ENCODE measurements at regions of chr12 and their contacts with region 1.

Region 1: GRCh38 chr12:10001171-10001776 is 2.4 kb upstream of the CLEC1B start:
- DNase-seq: no peak
- ATAC-seq: no peak
- H3K4me3 ChIP-seq: no peak overlapping the region
- H3K4me3 Mint-ChIP-seq: no peak overlapping the region
- H3K27ac ChIP-seq: no peak overlapping the region
- H3K27ac Mint-ChIP-seq: no peak overlapping the region
- H3K4me1 ChIP-seq: no peaks in the 10 kb centered on the region
- H3K4me1 Mint-ChIP-seq: peaks cover 7% of the 10 kb centered on the region in 2 donors
- H3K27me3 ChIP-seq: no peaks in the 10 kb centered on the region
- H3K27me3 Mint-ChIP-seq: peaks cover 6 to 7% of the 10 kb centered on the region in 2 donors
- CTCF ChIP-seq: no peak

Region 2: GRCh38 chr12:9741726-9742125 is 259.5 kb before region 1 on chr12:
- intact Hi-C with region 1: loop called (anchors 5 kb)
- DNase-seq: peak; percentile 60 to 93
- ATAC-seq: peak; percentile 71 to 88 (median 82)
- H3K4me3 ChIP-seq: peak overlapping the region; percentile 21
- H3K4me3 Mint-ChIP-seq: peak overlapping the region; percentile 86
- H3K27ac ChIP-seq: peak overlapping the region; percentile 82
- H3K27ac Mint-ChIP-seq: peak overlapping the region; percentile 84 to 85
- H3K4me1 ChIP-seq: peaks cover 32% of the 10 kb centered on the region
- H3K4me1 Mint-ChIP-seq: peaks cover 52 to 53% of the 10 kb centered on the region in 2 donors
- H3K27me3 ChIP-seq: no peaks in the 10 kb centered on the region
- H3K27me3 Mint-ChIP-seq: no peaks in the 10 kb centered on the region
- CTCF ChIP-seq: no peak

Region 3: GRCh38 chr12:10016881-10017280 is 15.6 kb after region 1 on chr12:
- intact Hi-C with region 1: no loop called
- DNase-seq: no peak
- ATAC-seq: no peak
- H3K4me3 ChIP-seq: no peak overlapping the region
- H3K4me3 Mint-ChIP-seq: no peak overlapping the region
- H3K27ac ChIP-seq: no peak overlapping the region
- H3K27ac Mint-ChIP-seq: no peak overlapping the region
- H3K4me1 ChIP-seq: no peaks in the 10 kb centered on the region
- H3K4me1 Mint-ChIP-seq: no peaks in the 10 kb centered on the region
- H3K27me3 ChIP-seq: no peaks in the 10 kb centered on the region
- H3K27me3 Mint-ChIP-seq: no peaks in the 10 kb centered on the region
- CTCF ChIP-seq: no peak

Region 4: DNA sequence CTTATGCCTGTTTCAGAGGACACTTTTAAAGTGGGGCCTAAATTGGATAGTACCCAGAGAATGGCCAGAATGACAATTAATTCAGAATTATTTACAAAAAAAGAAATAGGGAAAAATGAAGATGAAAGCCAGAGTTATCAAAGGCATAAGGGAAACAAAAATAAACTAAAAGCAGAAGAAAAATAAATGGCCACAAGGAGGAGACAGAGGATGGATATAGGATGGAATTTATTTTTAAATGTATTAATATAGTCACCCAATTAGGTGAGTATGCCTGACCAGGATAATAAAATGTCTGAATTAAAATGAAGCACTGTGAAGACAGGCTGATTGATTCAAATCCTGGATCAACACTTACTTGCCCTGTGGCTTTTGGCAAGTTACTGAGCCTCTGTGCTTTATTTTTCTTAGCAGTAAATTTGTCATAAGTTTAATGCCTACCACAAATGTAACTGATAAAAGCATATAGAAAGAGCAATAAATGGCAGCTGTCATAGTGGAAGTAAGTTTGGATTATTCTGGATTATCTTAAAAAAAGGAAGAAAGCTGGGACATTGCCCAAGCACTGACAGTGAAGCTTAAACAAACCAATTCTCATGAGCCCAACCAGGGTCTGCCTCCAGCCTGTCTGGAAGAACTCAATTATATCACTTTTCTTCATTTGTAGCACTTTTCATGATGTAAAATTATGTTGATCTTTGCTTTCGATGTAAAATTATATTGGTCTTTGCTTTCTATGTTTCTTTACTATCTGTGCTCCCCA is 32.7 kb after region 1 on chr12:
- intact Hi-C with region 1: loop called (anchors 2 kb)
- DNase-seq: no peak
- ATAC-seq: no peak
- H3K4me3 ChIP-seq: no peak overlapping the region
- H3K4me3 Mint-ChIP-seq: no peak overlapping the region
- H3K27ac ChIP-seq: no peak overlapping the region
- H3K27ac Mint-ChIP-seq: no peak overlapping the region
- H3K4me1 ChIP-seq: no peaks in the 10 kb centered on the region
- H3K4me1 Mint-ChIP-seq: peaks cover 0 to 5% of the 10 kb centered on the region in 2 donors
- H3K27me3 ChIP-seq: no peaks in the 10 kb centered on the region
- H3K27me3 Mint-ChIP-seq: peaks cover 0 to 4% of the 10 kb centered on the region in 2 donors
- CTCF ChIP-seq: peak; percentile 56

Region 5: DNA sequence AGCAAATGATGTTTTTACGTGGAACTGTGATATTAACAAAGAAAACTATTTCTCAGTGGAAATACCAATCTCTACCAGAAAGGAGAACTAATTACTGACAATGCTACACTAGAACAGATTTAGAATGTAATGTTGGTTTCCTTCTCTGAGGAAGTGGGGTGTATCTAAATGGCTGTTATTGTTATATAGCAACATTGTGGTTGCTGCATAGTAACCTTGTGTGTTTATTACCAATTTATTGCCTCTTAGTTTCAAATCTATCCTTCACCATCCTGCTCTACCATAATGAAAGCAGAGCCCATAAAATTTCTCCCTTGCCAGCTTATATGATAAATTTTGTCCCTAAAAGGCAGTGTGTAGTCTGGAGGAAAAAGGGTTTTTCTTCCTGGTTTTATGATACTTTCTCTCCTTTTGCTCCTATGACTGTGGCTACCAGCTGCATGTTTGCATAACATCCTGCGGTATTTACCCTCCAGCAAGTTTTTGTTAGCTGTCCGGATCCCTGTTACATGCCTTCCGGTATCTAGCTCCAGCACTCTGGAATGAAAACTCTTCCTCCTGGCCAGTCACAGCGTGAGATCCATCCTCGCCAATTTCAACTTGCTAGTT is 394.2 kb after region 1 on chr12:
- intact Hi-C with region 1: no loop called
- DNase-seq: peak in 1 of 2 donors; percentile 75
- ATAC-seq: peak; percentile 52 to 82 (median 75)
- H3K4me3 ChIP-seq: peak overlapping the region; percentile 5
- H3K4me3 Mint-ChIP-seq: peak overlapping the region; percentile 87
- H3K27ac ChIP-seq: peak overlapping the region; percentile 92
- H3K27ac Mint-ChIP-seq: peak overlapping the region; percentile 97 to 98
- H3K4me1 ChIP-seq: peaks cover 42% of the 10 kb centered on the region
- H3K4me1 Mint-ChIP-seq: peaks cover 63 to 68% of the 10 kb centered on the region in 2 donors
- H3K27me3 ChIP-seq: no peaks in the 10 kb centered on the region
- H3K27me3 Mint-ChIP-seq: no peaks in the 10 kb centered on the region
- CTCF ChIP-seq: no peak